Left ventricle myocardium inferior (tissue), 1 donor: ENCODE measurements at regions of chr5 and their contacts with region 1.

Region 1: DNA sequence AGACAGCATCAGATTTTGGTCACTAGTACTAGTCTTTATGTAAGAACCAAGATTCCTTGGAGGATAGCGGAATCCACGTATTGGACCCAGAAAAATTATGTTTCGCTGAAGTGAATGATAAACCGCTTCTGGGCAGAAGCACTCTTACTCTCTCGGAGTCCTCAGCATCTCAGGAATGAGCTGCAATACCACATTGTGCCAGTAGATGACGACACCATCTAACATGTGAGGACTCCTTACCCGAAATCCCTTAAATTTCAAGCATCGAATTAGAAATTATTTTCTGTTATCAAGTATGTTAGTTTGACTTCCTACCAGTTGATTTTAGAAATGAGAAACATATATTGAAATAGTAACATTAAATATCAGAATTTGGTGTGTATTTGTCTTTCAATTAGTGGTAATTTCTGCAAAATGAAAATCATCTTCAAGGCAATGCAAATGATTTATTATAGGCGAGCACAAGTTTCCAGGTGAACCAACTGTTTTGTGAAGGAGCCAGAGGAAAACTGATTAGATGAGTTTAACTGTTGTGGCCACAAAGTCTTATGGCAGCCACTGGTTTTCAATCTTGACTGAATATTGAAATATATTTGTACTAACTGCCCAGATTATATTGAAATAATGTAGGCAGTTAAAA is 66.0 kb upstream of the CAMK4 start:
- DNase-seq: peak; percentile 24
- H3K4me3 ChIP-seq: no peak overlapping the region
- H3K27ac ChIP-seq: no peak overlapping the region
- H3K4me1 ChIP-seq: no peaks in the 10 kb centered on the region
- H3K27me3 ChIP-seq: no peaks in the 10 kb centered on the region
- CTCF ChIP-seq: peak; percentile 100

Region 2: DNA sequence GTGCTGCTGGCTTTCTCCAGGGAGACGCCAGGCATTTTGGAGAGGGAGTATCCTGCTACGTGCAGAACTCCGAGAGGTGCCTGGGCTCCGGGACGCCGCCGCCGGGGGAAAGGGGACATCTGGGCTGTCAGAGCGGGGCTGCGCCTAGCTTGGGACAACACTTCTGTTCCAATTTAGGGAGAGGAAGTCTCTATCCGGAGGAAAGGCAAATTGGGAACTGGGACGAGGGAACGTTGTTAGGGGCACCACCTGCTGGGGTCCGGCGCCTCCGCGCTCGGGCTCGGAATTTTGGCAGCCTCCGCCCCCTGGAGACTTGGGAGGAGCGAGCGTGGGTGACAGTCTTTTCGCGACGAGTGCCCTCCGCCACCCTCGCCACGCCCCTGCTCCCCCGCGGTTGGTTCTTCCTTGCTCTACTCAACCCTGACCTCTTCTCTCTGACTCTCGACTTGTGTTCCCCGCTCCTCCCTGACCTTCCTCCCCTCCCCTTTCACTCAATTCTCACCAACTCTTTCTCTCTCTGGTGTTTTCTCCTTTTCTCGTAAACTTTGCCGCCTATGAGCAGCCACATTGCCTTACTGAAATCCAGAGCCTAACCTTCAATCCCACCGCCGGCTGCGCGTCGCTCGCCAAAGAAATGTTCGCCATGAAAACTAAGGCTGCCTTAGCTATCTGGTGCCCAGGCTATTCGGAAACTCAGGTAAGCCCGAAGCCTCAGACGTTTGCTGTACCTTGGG is 85.1 kb before region 1 on chr5:
- intact Hi-C with region 1: no loop called
- DNase-seq: peak; percentile 71
- H3K4me3 ChIP-seq: peak overlapping the region; percentile 71
- H3K27ac ChIP-seq: peak overlapping the region; percentile 67
- H3K4me1 ChIP-seq: peaks cover 45% of the 10 kb centered on the region
- H3K27me3 ChIP-seq: peaks cover 38% of the 10 kb centered on the region
- CTCF ChIP-seq: no peak

Region 3: DNA sequence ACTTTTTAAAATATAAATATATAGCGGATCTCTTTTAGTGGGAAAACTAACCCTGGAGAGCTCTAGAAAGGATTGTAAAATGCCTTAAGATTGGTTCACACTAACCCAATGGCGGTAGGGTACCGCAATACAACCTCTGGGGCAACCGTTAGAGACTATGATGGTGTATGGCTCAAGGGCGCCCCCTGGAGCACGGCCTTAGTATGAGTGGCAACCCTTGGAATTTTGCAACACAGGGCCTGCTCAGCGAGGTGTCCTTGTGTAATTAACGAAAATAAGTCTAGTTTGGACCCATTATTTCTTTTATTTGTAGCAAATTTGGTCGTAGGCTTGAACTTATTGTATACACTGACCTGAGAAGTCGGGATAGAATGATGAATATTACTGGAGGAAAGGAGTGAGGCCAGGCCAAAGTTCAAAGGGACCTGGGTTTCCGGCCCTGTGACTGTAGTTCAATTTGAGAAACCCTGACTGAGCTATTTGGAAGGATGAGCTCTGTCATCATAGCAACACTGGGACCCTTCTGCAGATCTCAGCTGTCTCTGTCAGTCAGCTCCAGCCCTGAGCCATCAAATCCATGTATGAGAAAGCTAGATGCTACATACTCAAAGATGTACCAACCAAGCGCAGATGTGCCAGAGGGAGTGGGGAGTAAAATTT is 120.8 kb after region 1 on chr5:
- intact Hi-C with region 1: loop called (anchors 2 kb)
- DNase-seq: peak; percentile 49
- H3K4me3 ChIP-seq: no peak overlapping the region
- H3K27ac ChIP-seq: no peak overlapping the region
- H3K4me1 ChIP-seq: no peaks in the 10 kb centered on the region
- H3K27me3 ChIP-seq: no peaks in the 10 kb centered on the region
- CTCF ChIP-seq: peak; percentile 75

Region 4: GRCh38 chr5:111337688-111338087 is 179.5 kb after region 1 on chr5:
- intact Hi-C with region 1: no loop called
- DNase-seq: no peak
- H3K4me3 ChIP-seq: no peak overlapping the region
- H3K27ac ChIP-seq: no peak overlapping the region
- H3K4me1 ChIP-seq: no peaks in the 10 kb centered on the region
- H3K27me3 ChIP-seq: no peaks in the 10 kb centered on the region
- CTCF ChIP-seq: no peak